Activated CD8-positive, alpha-beta T cell treated with anti-CD3 and anti-CD28 coated beads for 36 hours (primary cell): ENCODE measurements at regions of chr15 and their contacts with region 1.

Region 1: GRCh38 chr15:78034495-78035191 is 42.9 kb downstream of the TBC1D2B start:
- DNase-seq: peak; percentile 95
- ATAC-seq: peak; percentile 87
- H3K4me3 Mint-ChIP-seq: peak overlapping the region; percentile 49
- H3K27ac Mint-ChIP-seq: peak overlapping the region; percentile 81
- H3K4me1 Mint-ChIP-seq: peaks cover 80% of the 10 kb centered on the region
- H3K27me3 Mint-ChIP-seq: no peaks in the 10 kb centered on the region
- CTCF ChIP-seq: no peak

Region 2: GRCh38 chr15:77959432-77959879 is 75.2 kb before region 1 on chr15:
- CTCF ChIA-PET with region 1: interaction called, 12 read pairs
- POLR2A ChIA-PET with region 1: no interaction called
- intact Hi-C with region 1: no loop called
- DNase-seq: peak; percentile 84
- ATAC-seq: peak; percentile 100
- H3K4me3 Mint-ChIP-seq: peak overlapping the region; percentile 54
- H3K27ac Mint-ChIP-seq: no peak overlapping the region
- H3K4me1 Mint-ChIP-seq: peaks cover 2% of the 10 kb centered on the region
- H3K27me3 Mint-ChIP-seq: peaks cover 7% of the 10 kb centered on the region
- CTCF ChIP-seq: peak; percentile 98

Region 3: GRCh38 chr15:77986891-77987764 is 47.5 kb before region 1 on chr15:
- CTCF ChIA-PET with region 1: no interaction called
- POLR2A ChIA-PET with region 1: no interaction called
- intact Hi-C with region 1: no loop called
- DNase-seq: no peak
- ATAC-seq: no peak
- H3K4me3 Mint-ChIP-seq: no peak overlapping the region
- H3K27ac Mint-ChIP-seq: no peak overlapping the region
- H3K4me1 Mint-ChIP-seq: peaks cover 17% of the 10 kb centered on the region
- H3K27me3 Mint-ChIP-seq: peaks cover 2% of the 10 kb centered on the region
- CTCF ChIP-seq: no peak

Region 4: GRCh38 chr15:78000091-78000926 is 34.3 kb before region 1 on chr15:
- CTCF ChIA-PET with region 1: interaction called, 11 read pairs
- POLR2A ChIA-PET with region 1: no interaction called
- intact Hi-C with region 1: no loop called
- DNase-seq: peak; percentile 88
- ATAC-seq: peak; percentile 99
- H3K4me3 Mint-ChIP-seq: no peak overlapping the region
- H3K27ac Mint-ChIP-seq: peak overlapping the region; percentile 48
- H3K4me1 Mint-ChIP-seq: peaks cover 16% of the 10 kb centered on the region
- H3K27me3 Mint-ChIP-seq: no peaks in the 10 kb centered on the region
- CTCF ChIP-seq: peak; percentile 70

Region 5: DNA sequence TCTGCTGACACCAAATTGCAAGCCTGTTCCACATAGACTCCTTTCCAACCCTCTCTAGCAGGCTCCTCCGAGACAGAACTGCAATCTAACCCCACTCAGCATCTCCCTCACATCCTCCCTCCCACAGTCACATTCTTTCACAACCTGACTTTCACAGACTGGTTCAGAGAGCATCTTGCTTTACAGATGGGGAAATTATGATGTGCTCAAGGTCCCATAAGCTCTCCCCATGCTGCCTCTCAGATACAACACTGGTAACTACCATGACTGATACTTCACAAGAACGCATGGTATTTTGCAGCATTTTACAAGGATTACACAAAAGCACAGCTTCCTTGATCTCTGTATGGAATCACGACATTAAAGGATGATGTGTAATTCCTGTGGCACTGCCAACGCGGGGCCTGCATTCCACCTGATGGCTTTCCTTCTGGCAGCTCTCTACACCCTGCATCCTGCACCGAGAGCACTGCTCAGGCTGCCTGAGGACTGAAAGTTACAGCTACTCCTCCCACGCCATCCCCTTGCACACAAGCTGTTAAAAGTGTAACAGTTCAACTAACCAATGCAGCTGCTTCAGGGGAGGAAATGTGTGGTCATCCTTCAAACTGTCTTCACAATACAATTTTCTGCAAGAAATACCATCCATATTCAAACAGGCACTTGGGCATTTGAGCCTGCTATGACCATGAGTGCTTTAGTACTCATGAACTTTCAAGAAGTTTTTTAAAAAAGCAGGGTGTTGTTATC is 15.2 kb after region 1 on chr15:
- CTCF ChIA-PET with region 1: interaction called, 9 read pairs
- POLR2A ChIA-PET with region 1: interaction called, 29 read pairs
- intact Hi-C with region 1: no loop called
- DNase-seq: peak; percentile 94
- ATAC-seq: peak; percentile 78
- H3K4me3 Mint-ChIP-seq: peak overlapping the region; percentile 41
- H3K27ac Mint-ChIP-seq: peak overlapping the region; percentile 95
- H3K4me1 Mint-ChIP-seq: peaks cover 94% of the 10 kb centered on the region
- H3K27me3 Mint-ChIP-seq: no peaks in the 10 kb centered on the region
- CTCF ChIP-seq: no peak

Region 6: GRCh38 chr15:78065284-78065872 is 30.7 kb after region 1 on chr15:
- CTCF ChIA-PET with region 1: interaction called, 44 read pairs
- POLR2A ChIA-PET with region 1: interaction called, 31 read pairs
- intact Hi-C with region 1: loop called (anchors 2 kb)
- DNase-seq: no peak
- ATAC-seq: no peak
- H3K4me3 Mint-ChIP-seq: no peak overlapping the region
- H3K27ac Mint-ChIP-seq: no peak overlapping the region
- H3K4me1 Mint-ChIP-seq: peaks cover 11% of the 10 kb centered on the region
- H3K27me3 Mint-ChIP-seq: no peaks in the 10 kb centered on the region
- CTCF ChIP-seq: no peak

Region 7: DNA sequence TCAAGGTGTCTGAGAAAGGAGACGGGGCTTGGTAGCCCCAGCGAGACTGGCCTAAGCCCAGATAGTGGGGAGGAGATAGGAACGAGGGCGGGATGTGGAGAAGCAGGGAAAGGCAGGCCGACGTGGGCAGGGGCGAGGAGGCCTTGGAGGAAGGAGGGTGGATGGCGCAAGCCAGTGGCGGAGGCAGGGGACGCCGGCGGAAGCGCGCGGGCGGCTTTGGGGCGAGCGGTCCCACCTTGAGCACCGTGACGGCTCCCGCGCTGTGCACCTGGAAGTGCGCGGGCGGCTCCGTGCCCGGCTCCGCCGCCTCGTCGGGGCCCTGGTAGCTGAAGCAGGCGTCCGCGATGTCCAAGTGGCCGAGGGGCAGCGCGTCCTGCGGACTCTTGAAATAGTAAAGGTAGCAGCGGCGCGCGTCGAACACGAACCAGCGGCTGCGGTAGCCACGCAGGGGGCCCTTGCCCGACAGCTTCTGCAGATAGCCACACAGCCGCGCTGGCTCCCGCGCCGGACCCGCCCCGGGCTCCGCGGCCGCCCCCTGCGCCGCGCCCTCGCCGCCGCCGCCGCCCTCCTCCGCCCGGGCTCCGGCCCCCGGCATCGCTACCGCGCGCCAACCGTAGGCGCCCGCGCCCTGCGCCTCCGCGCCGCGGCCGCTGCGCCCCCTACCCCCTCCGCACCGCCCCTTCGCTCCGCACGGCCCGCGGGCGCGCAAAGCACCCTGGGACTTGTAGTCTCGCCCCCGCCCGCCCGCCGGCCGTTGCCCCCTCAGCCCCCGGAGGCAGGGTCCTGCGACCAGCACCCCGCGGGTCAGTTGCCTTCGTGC is 42.6 kb after region 1 on chr15 and contains the start of gene TBC1D2B:
- CTCF ChIA-PET with region 1: interaction called, 44 read pairs
- POLR2A ChIA-PET with region 1: interaction called, 17 read pairs
- intact Hi-C with region 1: no loop called
- DNase-seq: peak; percentile 71
- ATAC-seq: peak; percentile 82
- H3K4me3 Mint-ChIP-seq: peak within 1 kb of the TSS; percentile 91
- H3K27ac Mint-ChIP-seq: peak within 1 kb of the TSS; percentile 92
- H3K4me1 Mint-ChIP-seq: peaks cover 38% of the 10 kb centered on the region
- H3K27me3 Mint-ChIP-seq: no peaks in the 10 kb centered on the region
- CTCF ChIP-seq: no peak
- total RNA-seq, gene TBC1D2B: 62.9 to 65.7 TPM